ENCODE measurements at regions of chr19 and their contacts with region 1.

Region 1: DNA sequence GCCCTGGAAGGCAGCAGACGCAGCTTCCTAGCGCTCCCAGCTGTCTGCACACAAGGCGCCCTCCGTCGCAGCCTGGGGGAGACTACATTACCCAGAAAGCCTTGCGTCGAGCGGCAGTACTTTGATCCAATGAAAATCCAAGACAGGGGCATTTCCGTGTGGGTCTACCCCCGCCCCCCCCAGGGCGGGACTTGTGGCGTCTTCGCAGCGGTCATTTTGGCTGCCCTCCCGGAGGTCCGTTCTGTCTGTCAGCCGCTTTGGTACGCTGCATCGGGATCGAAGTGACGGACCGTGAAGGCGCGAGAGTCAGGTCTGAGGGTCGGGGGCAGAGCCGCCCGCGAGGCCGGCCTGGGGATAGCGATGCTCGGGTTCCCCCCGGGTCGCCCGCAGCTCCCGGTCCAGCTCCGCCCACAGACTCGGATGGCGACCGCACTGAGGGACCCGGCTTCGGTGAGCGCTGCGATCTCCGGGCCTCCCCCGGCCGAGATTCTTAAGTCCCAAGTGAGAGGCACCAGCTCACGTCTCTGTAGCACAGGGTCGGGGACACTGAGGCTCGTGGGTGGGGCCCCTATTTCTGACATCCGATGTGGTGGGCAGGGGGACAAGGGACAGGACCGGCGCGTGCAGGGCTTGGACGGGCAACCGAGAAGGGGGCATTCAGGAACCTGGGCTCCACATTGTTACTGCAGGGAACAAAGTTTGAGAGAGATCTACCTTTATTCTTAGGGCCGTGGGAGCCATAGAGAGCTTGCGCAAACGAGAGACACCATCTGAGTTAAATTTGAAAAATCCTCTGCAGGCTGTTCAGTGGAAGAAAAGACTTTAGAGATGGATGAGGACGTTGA is at the start of gene ZNF211:
- DNase-seq: peak; percentile 91
- H3K4me3 Mint-ChIP-seq: peak within 1 kb of the TSS; percentile 87
- H3K27ac Mint-ChIP-seq: peak within 1 kb of the TSS; percentile 72
- H3K4me1 Mint-ChIP-seq: peaks cover 18% of the 10 kb centered on the region
- H3K27me3 Mint-ChIP-seq: no peaks in the 10 kb centered on the region
- total RNA-seq, gene ZNF211: 5.2 to 5.7 TPM

Region 2: GRCh38 chr19:57527136-57527881 is 105.9 kb before region 1 on chr19 and contains the start of gene ZNF549:
- CTCF ChIA-PET with region 1: no interaction called
- intact Hi-C with region 1: loop called (anchors 1 kb)
- DNase-seq: peak; percentile 91
- H3K4me3 Mint-ChIP-seq: peak within 1 kb of the TSS; percentile 80
- H3K27ac Mint-ChIP-seq: peak within 1 kb of the TSS; percentile 70
- H3K4me1 Mint-ChIP-seq: peaks cover 14% of the 10 kb centered on the region
- H3K27me3 Mint-ChIP-seq: no peaks in the 10 kb centered on the region
- total RNA-seq, gene ZNF549: 1.8 TPM

Region 3: GRCh38 chr19:57613941-57614743 is 19.1 kb before region 1 on chr19 and contains the start of gene ZNF134:
- CTCF ChIA-PET with region 1: no interaction called
- intact Hi-C with region 1: loop called (anchors 1 kb)
- DNase-seq: peak; percentile 92
- H3K4me3 Mint-ChIP-seq: peak within 1 kb of the TSS; percentile 92
- H3K27ac Mint-ChIP-seq: peak within 1 kb of the TSS; percentile 57
- H3K4me1 Mint-ChIP-seq: peaks cover 24% of the 10 kb centered on the region
- H3K27me3 Mint-ChIP-seq: no peaks in the 10 kb centered on the region
- total RNA-seq, gene ZNF134: 6.9 to 7.0 TPM

Region 4: DNA sequence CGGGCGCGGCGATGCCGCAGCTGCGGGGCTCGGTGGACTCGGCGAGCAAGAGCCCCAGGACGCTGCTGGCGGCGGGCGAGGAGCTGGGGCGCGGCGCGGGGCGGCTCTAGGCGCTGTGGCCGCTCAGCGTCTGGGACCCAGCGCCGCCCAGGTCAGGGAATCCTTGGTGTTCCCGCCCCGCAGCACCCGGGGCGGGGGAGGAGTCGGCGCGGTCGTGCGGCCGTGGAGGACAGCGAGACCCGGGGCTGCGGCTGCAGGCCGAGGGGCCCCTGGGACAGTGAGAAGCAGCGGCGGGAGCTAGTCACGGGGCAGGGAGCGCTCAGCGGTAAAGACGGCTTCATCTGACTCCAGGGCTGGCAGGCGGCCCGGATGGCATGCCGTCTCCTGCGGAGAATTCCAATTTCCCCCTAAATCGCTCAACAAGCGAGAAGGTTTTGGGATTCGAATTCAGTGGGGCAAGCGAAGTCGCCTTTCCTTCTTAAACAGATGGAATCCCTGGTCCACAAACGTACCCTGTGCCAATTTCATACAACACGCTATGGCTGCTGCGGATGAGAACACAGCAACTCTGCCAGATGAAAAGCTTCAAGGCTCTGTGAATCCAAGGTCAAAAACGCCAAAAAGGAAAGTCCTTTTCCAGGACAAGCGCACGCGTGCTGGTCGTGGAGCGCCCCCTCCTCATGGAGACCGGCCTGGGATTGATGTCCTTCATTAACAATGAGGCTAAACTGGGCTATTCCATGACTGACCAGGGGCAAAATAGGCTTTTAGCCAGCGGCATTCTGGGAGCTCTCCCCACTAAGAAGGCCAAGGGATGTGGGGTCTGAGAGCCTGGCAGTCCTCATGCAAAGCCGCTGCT is 31.3 kb after region 1 on chr19:
- CTCF ChIA-PET with region 1: no interaction called
- intact Hi-C with region 1: loop called (anchors 1 kb)
- DNase-seq: peak; percentile 13
- H3K4me3 Mint-ChIP-seq: peak overlapping the region; percentile 71
- H3K27ac Mint-ChIP-seq: no peak overlapping the region
- H3K4me1 Mint-ChIP-seq: peaks cover 2% of the 10 kb centered on the region
- H3K27me3 Mint-ChIP-seq: peaks cover 38% of the 10 kb centered on the region

Region 5: DNA sequence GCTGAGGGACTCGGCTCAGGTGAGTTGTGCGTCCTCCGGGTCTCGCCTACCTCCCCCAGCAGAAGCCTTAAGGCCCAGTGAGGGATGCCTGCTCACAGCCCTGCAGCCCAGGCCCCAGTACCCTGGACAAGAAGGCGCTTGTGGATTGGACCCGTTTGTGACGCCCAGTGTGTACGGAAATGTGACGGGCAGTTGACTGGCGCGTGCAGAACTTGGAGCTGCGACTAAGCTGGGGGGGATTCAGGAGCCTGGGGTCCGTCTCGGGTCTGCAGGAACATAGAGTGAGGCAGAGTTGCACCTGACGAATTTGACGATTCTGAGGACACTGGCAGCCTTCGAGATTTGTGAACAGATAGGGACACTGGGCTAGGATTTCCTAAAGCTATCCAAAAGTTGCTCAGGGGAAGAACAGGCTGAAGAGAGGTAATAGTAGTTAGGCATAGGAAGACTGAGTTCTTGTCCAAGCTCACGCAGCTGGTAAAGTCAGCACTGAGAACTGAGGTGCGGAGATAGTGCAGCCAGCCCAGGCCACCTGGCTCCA is 49.1 kb after region 1 on chr19:
- CTCF ChIA-PET with region 1: no interaction called
- intact Hi-C with region 1: loop called (anchors 1 kb)
- DNase-seq: no peak
- H3K4me3 Mint-ChIP-seq: peak overlapping the region; percentile 94
- H3K27ac Mint-ChIP-seq: peak overlapping the region; percentile 84
- H3K4me1 Mint-ChIP-seq: peaks cover 32% of the 10 kb centered on the region
- H3K27me3 Mint-ChIP-seq: no peaks in the 10 kb centered on the region